ENCODE measurements at regions of chr3 and their contacts with region 1.

Region 1: GRCh38 chr3:45037734-45038455 is 11.8 kb downstream of the CLEC3B start:
- DNase-seq: peak; percentile 91
- ATAC-seq: peak; percentile 98
- H3K4me3 ChIP-seq: no peak overlapping the region
- H3K4me3 Mint-ChIP-seq: no peak overlapping the region
- H3K27ac ChIP-seq: no peak overlapping the region
- H3K27ac Mint-ChIP-seq: no peak overlapping the region
- H3K4me1 ChIP-seq: peaks cover 23 to 33% of the 10 kb centered on the region in 2 donors
- H3K4me1 Mint-ChIP-seq: peaks cover 33% of the 10 kb centered on the region
- H3K27me3 ChIP-seq: peaks cover 0 to 28% (median 9%) of the 10 kb centered on the region in 4 experiments
- H3K27me3 Mint-ChIP-seq: peaks cover 18% of the 10 kb centered on the region
- CTCF ChIP-seq: peak; percentile 89

Region 2: GRCh38 chr3:43071313-43071893 is 1966.5 kb before region 1 on chr3:
- CTCF ChIA-PET with region 1: no interaction called
- POLR2A ChIA-PET with region 1: no interaction called
- intact Hi-C with region 1: no loop called
- DNase-seq: no peak
- ATAC-seq: no peak
- H3K4me3 ChIP-seq: no peak overlapping the region
- H3K4me3 Mint-ChIP-seq: no peak overlapping the region
- H3K27ac ChIP-seq: no peak overlapping the region
- H3K27ac Mint-ChIP-seq: no peak overlapping the region
- H3K4me1 ChIP-seq: no peaks in the 10 kb centered on the region
- H3K4me1 Mint-ChIP-seq: no peaks in the 10 kb centered on the region
- H3K27me3 ChIP-seq: no peaks in the 10 kb centered on the region
- H3K27me3 Mint-ChIP-seq: peaks cover 7% of the 10 kb centered on the region
- CTCF ChIP-seq: no peak

Region 3: DNA sequence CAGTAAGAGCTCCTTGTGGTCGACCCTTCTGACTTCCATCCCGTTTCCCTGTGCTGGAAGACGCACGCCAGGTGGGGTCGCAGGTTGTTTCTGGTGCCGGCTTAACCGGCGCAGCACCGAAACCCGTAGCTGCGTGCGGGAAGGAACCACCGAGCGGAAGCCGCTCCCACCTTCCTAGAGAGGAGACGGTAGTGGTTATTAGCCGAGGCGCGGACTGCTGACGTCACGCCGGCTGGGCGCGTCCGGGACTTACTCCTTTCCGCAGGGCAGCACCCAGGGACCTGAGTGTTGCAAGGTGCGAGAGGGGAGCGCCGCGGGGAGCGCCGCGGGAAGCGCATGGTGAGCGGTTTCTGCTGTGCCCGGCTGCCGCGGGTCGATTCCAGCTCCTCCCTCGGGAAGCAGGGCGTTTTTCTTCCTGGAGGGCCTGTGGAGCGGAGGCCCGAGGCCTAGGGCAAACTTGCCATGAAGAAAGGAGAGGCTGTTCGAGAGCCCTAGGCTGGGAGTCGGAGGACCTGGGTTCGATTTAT is 308.4 kb before region 1 on chr3 and contains the start of gene ZNF501:
- CTCF ChIA-PET with region 1: no interaction called
- POLR2A ChIA-PET with region 1: no interaction called
- intact Hi-C with region 1: no loop called
- DNase-seq: peak; percentile 90
- ATAC-seq: peak; percentile 94
- H3K4me3 ChIP-seq: peak within 1 kb of the TSS; percentile 35 to 89 (median 77)
- H3K4me3 Mint-ChIP-seq: peak within 1 kb of the TSS; percentile 96
- H3K27ac ChIP-seq: peak within 1 kb of the TSS; percentile 15 to 32
- H3K27ac Mint-ChIP-seq: peak within 1 kb of the TSS; percentile 86
- H3K4me1 ChIP-seq: peaks cover 6 to 12% of the 10 kb centered on the region in 2 donors
- H3K4me1 Mint-ChIP-seq: peaks cover 13% of the 10 kb centered on the region
- H3K27me3 ChIP-seq: no peaks in the 10 kb centered on the region
- H3K27me3 Mint-ChIP-seq: no peaks in the 10 kb centered on the region
- CTCF ChIP-seq: no peak
- total RNA-seq, gene ZNF501: 6.1 and 7.2 TPM in 2 replicates

Region 4: DNA sequence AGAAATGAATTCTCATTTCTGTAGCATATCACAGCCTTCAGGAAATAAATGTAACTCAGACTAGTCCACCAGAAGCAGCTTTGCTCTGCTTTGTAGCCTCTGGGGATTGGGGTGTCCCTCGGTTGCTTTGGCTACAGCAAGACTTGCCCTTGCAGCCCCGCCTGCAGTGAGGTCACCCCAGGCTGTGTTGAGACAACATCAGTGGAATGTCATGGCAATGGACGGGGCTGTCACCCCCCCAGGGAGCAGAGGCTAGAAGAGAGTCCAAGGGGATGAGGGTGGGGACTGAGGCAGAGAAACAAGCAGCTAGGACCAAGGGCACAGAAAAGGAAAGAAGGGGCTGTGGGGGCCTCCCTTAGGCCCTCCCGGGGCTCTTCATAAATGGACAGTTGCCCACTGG is 10.9 kb before region 1 on chr3:
- CTCF ChIA-PET with region 1: interaction called, 11 read pairs
- POLR2A ChIA-PET with region 1: no interaction called
- intact Hi-C with region 1: no loop called
- DNase-seq: no peak
- ATAC-seq: no peak
- H3K4me3 ChIP-seq: no peak overlapping the region
- H3K4me3 Mint-ChIP-seq: no peak overlapping the region
- H3K27ac ChIP-seq: no peak overlapping the region
- H3K27ac Mint-ChIP-seq: no peak overlapping the region
- H3K4me1 ChIP-seq: no peaks in the 10 kb centered on the region
- H3K4me1 Mint-ChIP-seq: no peaks in the 10 kb centered on the region
- H3K27me3 ChIP-seq: peaks cover 0 to 28% (median 5%) of the 10 kb centered on the region in 4 experiments
- H3K27me3 Mint-ChIP-seq: peaks cover 11% of the 10 kb centered on the region
- CTCF ChIP-seq: no peak

Region 5: DNA sequence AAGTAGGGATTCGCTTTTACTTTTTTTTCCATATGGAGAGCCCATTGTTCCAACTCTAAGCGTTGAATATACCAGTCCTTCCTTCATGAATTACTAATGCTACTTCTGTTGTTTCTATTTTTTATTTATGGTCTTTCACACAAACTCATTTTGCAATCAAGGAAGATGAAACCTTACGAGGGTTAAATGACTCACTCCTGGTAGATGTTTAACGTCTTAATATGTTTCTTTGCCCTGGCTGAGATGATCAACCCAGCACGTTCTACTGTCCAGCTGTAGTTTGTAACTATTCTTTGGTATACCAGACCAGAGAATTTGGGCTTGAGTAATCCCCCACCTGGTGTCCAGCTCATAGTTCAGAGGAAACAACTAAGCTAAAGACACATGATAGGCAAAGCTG is 85.1 kb after region 1 on chr3:
- CTCF ChIA-PET with region 1: no interaction called
- POLR2A ChIA-PET with region 1: no interaction called
- intact Hi-C with region 1: no loop called
- DNase-seq: no peak
- ATAC-seq: no peak
- H3K4me3 ChIP-seq: no peak overlapping the region
- H3K4me3 Mint-ChIP-seq: no peak overlapping the region
- H3K27ac ChIP-seq: no peak overlapping the region
- H3K27ac Mint-ChIP-seq: no peak overlapping the region
- H3K4me1 ChIP-seq: no peaks in the 10 kb centered on the region
- H3K4me1 Mint-ChIP-seq: no peaks in the 10 kb centered on the region
- H3K27me3 ChIP-seq: peaks cover 0 to 10% (median 4%) of the 10 kb centered on the region in 4 experiments
- H3K27me3 Mint-ChIP-seq: peaks cover 49% of the 10 kb centered on the region
- CTCF ChIP-seq: no peak

Region 6: DNA sequence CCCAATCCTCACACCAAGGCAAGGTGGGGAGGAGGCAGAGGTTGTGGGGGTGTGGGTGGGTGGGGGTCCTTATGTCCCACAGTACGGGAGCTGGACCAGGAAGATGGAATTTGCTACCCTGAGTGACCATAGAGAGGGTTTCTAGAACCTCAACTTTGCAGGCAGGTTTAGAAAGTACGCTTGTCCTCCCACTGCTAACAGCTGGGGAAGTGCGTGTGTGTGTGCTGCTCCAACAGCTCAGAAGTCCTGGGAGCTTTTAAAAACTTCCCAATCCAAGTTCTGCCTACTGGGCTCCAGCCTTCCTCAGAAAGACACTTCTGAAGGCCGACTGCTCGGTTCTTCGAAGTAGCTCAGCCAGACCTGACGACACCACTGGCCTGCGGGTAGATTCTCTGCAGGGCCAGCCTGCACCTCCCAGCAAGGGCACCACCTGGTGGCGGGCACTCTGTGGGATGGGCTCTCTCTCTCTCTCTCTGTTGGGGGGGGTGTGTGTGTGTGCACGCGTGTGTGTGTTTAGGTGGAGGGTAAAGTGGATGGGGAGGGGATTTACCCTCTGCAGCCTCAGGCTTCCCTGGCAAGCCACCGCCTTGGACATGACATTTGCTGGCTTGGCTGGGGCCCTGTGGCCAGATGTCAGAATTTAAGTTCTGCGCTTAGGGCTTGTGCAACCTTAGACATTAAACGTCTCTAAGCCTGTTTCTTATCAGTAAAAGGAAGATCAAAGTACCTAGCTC is 172.6 kb after region 1 on chr3:
- CTCF ChIA-PET with region 1: interaction called, 77 read pairs
- POLR2A ChIA-PET with region 1: no interaction called
- intact Hi-C with region 1: loop called (anchors 1 kb)
- DNase-seq: peak; percentile 58
- ATAC-seq: peak; percentile 47
- H3K4me3 ChIP-seq: no peak overlapping the region
- H3K4me3 Mint-ChIP-seq: no peak overlapping the region
- H3K27ac ChIP-seq: no peak overlapping the region
- H3K27ac Mint-ChIP-seq: no peak overlapping the region
- H3K4me1 ChIP-seq: no peaks in the 10 kb centered on the region
- H3K4me1 Mint-ChIP-seq: no peaks in the 10 kb centered on the region
- H3K27me3 ChIP-seq: peaks cover 0 to 12% (median 1%) of the 10 kb centered on the region in 4 experiments
- H3K27me3 Mint-ChIP-seq: peaks cover 23% of the 10 kb centered on the region
- CTCF ChIP-seq: peak; percentile 35

Region 7: DNA sequence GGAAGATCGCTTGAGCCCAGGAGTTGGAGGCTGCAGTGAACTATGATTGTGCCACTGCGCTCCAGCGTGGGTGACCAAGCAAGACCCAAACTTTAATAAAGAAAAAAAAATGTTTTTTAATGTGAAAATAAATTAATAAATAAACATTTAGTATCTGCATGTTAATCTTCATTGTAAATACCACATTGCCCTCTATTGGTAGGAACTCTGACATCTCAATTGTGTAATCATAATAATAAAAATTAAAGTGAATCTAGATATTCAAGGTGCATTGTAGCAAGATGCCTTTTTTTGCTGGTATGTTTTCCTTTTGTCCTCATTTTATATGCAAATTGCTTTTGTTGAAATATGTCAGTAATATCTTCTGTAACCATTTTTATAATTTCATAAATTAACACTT is 461.6 kb after region 1 on chr3:
- CTCF ChIA-PET with region 1: interaction called, 16 read pairs
- POLR2A ChIA-PET with region 1: no interaction called
- intact Hi-C with region 1: loop called (anchors 2 kb)
- DNase-seq: no peak
- ATAC-seq: no peak
- H3K4me3 ChIP-seq: no peak overlapping the region
- H3K4me3 Mint-ChIP-seq: no peak overlapping the region
- H3K27ac ChIP-seq: no peak overlapping the region
- H3K27ac Mint-ChIP-seq: no peak overlapping the region
- H3K4me1 ChIP-seq: no peaks in the 10 kb centered on the region
- H3K4me1 Mint-ChIP-seq: no peaks in the 10 kb centered on the region
- H3K27me3 ChIP-seq: no peaks in the 10 kb centered on the region
- H3K27me3 Mint-ChIP-seq: no peaks in the 10 kb centered on the region
- CTCF ChIP-seq: peak; percentile 24

Region 8: GRCh38 chr3:45906681-45907407 is 868.9 kb after region 1 on chr3:
- CTCF ChIA-PET with region 1: no interaction called
- POLR2A ChIA-PET with region 1: no interaction called
- intact Hi-C with region 1: no loop called
- DNase-seq: no peak
- ATAC-seq: no peak
- H3K4me3 ChIP-seq: no peak overlapping the region
- H3K4me3 Mint-ChIP-seq: peak overlapping the region; percentile 42
- H3K27ac ChIP-seq: no peak overlapping the region
- H3K27ac Mint-ChIP-seq: peak overlapping the region; percentile 80
- H3K4me1 ChIP-seq: peaks cover 16 to 46% of the 10 kb centered on the region in 2 donors
- H3K4me1 Mint-ChIP-seq: peaks cover 53% of the 10 kb centered on the region
- H3K27me3 ChIP-seq: no peaks in the 10 kb centered on the region
- H3K27me3 Mint-ChIP-seq: no peaks in the 10 kb centered on the region
- CTCF ChIP-seq: no peak

Measured in B cell (primary cell).